HepG2 (cell line): ENCODE measurements at regions of chr3 and their contacts with region 1.

Region 1: DNA sequence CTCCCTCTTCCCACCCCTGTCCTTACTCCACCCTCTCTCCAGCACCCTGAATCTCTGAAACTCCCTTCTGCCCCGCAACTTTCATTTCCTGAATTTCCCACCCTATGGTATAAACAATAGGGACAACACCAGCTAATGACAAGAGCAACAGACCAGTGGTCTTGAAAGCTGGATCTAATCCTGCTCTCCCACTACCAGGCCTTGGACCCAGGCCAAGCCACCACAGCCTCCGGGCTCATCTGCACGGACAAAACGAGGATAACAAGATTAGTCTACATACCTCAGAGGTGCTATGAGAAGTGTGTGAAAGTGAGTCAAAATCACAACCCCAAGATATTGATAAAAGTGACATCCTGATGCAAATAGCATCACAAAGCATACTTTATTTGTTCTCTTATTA is 128.6 kb downstream of the ERC2 start:
- DNase-seq: no peak
- ATAC-seq: no peak
- H3K4me3 ChIP-seq: no peak overlapping the region
- H3K27ac ChIP-seq: no peak overlapping the region
- H3K4me1 ChIP-seq: no peaks in the 10 kb centered on the region
- H3K27me3 ChIP-seq: no peaks in the 10 kb centered on the region; a peak in 1 of 5 replicates
- CTCF ChIP-seq: no peak
- EP300 ChIP-seq: no peak
- POLR2A ChIP-seq: no peak
- RAD21 ChIP-seq: no peak

Region 2: GRCh38 chr3:56443372-56443771 is 103.7 kb after region 1 on chr3:
- CTCF ChIA-PET with region 1: interaction called, 24 read pairs
- POLR2A ChIA-PET with region 1: no interaction called
- in situ Hi-C with region 1: loop called (anchors 10 kb)
- intact Hi-C with region 1: loop called (anchors 1 kb)
- DNase-seq: no peak
- ATAC-seq: no peak
- H3K4me3 ChIP-seq: no peak overlapping the region
- H3K27ac ChIP-seq: no peak overlapping the region
- H3K4me1 ChIP-seq: no peaks in the 10 kb centered on the region
- H3K27me3 ChIP-seq: 0 out of 5 replicates have a peak, but pooled peaks cover 0 to 5% of the 10 kb centered on the region in 2 experiments
- CTCF ChIP-seq: no peak
- EP300 ChIP-seq: no peak
- POLR2A ChIP-seq: no peak
- RAD21 ChIP-seq: no peak

Region 3: DNA sequence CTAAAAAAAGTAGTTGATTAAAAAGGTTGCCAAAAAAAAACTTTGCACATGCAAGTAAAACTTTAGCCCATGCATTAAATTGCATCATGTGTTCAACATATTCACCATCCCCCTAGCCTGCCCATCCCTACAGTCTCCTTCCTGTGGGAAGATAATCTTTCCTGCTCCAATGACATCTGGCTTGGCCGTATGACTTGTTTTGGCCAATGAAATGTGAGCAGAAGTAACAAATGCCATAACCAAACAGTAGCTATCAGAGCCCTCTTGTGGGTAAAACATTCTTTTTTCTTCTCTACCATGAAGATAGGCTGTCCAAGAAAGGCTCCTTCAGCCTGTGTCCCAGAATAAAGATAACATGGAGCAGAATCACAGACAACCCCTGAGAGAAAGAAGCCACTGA is 113.3 kb after region 1 on chr3:
- CTCF ChIA-PET with region 1: interaction called, 24 read pairs
- POLR2A ChIA-PET with region 1: no interaction called
- in situ Hi-C with region 1: loop called (anchors 10 kb)
- intact Hi-C with region 1: no loop called
- DNase-seq: no peak
- ATAC-seq: no peak
- H3K4me3 ChIP-seq: no peak overlapping the region
- H3K27ac ChIP-seq: no peak overlapping the region
- H3K4me1 ChIP-seq: no peaks in the 10 kb centered on the region
- H3K27me3 ChIP-seq: peaks cover 0 to 6% of the 10 kb centered on the region in 2 experiments; a peak in 2 of 5 replicates
- CTCF ChIP-seq: no peak
- EP300 ChIP-seq: no peak
- POLR2A ChIP-seq: no peak
- RAD21 ChIP-seq: no peak

Region 4: GRCh38 chr3:56758539-56758981 is 418.9 kb after region 1 on chr3:
- CTCF ChIA-PET with region 1: no interaction called
- POLR2A ChIA-PET with region 1: no interaction called
- in situ Hi-C with region 1: no loop called
- intact Hi-C with region 1: no loop called
- DNase-seq: peak; percentile 86
- ATAC-seq: peak; percentile 89
- H3K4me3 ChIP-seq: no peak overlapping the region; a peak in 1 of 6 replicates
- H3K27ac ChIP-seq: peak overlapping the region; percentile 63
- H3K4me1 ChIP-seq: peaks cover 19% of the 10 kb centered on the region
- H3K27me3 ChIP-seq: no peaks in the 10 kb centered on the region
- CTCF ChIP-seq: no peak
- EP300 ChIP-seq: peak in 1 of 2 experiments; percentile 59; a peak in 1 of 4 replicates
- POLR2A ChIP-seq: no peak
- RAD21 ChIP-seq: no peak